ENCODE measurements at regions of chr7 and their contacts with region 1.

Region 1: DNA sequence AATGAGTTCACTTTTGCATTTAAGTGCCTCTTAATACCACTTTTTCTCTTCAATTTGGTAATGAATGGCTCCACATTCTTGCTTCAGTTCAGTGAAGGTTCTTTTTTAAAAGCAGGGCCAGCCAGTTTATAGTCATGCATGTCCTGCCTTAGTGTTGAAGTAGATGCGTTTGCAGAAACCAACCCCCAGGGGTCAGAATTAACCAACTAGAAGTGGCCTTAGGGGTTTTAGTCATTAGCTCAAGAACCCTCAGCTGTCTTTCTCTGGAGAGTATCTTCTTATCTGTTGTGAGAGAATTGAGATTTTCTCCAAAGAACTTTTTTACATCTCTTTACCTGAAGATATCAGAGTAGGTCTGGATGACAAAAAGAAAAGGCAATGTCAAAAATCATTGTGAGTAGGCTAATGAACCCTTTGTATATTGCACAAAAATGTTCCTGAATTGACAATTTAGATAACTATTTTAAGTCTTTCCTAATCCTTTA is 82.2 kb downstream of the PIK3CG start:
- DNase-seq: no peak
- ATAC-seq: peak; percentile 59
- H3K4me3 ChIP-seq: no peak overlapping the region
- H3K27ac ChIP-seq: no peak overlapping the region
- H3K4me1 ChIP-seq: no peaks in the 10 kb centered on the region
- H3K27me3 ChIP-seq: peaks cover 0 to 1% of the 10 kb centered on the region in 2 donors

Region 2: GRCh38 chr7:106895246-106895864 is 51.9 kb before region 1 on chr7:
- intact Hi-C with region 1: no loop called
- DNase-seq: no peak
- ATAC-seq: no peak
- H3K4me3 ChIP-seq: no peak overlapping the region
- H3K27ac ChIP-seq: no peak overlapping the region
- H3K4me1 ChIP-seq: no peaks in the 10 kb centered on the region
- H3K27me3 ChIP-seq: no peaks in the 10 kb centered on the region

Region 3: GRCh38 chr7:107150375-107151073 is 203.2 kb after region 1 on chr7:
- intact Hi-C with region 1: loop called in 1 of 2 experiments (anchors 5 kb)
- DNase-seq: peak; percentile 73 to 86
- ATAC-seq: peak; percentile 83
- H3K4me3 ChIP-seq: no peak overlapping the region
- H3K27ac ChIP-seq: no peak overlapping the region
- H3K4me1 ChIP-seq: no peaks in the 10 kb centered on the region
- H3K27me3 ChIP-seq: no peaks in the 10 kb centered on the region